H1 (cell line): ENCODE measurements at regions of chr4 and their contacts with region 1.

Region 1: GRCh38 chr4:38069271-38069760 is 109.1 kb downstream of the PTTG2 start:
- DNase-seq: no peak
- H3K4me3 ChIP-seq: no peak overlapping the region
- H3K27ac ChIP-seq: no peak overlapping the region
- H3K4me1 ChIP-seq: peaks cover 0 to 2% (median 0%) of the 10 kb centered on the region in 4 experiments; a peak in 1 of 7 replicates
- H3K27me3 ChIP-seq: no peaks in the 10 kb centered on the region
- CTCF ChIP-seq: peak; percentile 64 to 89 (median 74)
- EP300 ChIP-seq: no peak
- POLR2A ChIP-seq: no peak
- RAD21 ChIP-seq: peak; percentile 89 to 92

Region 2: DNA sequence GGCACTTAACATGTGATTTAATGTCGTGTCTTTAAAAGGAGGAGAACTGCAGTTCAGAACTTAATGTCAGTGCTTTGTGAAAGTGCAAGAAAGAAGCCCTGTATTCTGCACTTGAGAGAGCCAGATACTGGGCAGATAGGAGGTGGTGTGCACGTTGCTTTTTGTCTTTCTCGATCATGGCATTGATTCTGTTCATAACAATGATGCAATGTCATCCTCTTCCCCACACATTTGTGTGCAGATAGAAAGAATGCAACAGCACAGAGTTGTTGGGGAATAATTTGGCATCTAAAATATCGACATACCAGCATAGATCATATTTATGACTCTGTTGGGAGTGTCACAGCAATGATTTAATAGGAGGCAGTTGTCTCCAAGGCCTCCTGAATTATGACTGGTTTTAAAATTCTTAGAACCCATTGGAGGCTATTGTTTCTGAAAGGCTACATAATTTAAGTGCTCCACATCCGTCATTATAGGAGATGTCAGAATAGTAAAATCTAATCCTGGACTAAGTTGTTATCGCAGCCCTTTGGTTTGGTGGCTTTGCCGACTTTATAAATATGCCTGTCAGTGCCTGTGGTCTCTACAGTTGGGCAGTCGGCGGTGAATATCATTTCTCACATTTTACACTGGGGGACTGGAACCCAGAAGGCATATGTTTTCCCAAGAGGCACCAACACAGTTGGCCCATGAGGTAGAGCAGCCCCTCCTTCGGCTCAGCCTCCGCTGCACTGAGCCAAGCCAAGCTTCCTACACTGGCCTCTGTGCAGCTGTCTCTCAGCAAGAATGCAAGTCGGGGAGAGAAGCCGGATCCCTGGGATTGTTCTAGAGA is 15.8 kb after region 1 on chr4:
- CTCF ChIA-PET with region 1: interaction called, 25 read pairs
- POLR2A ChIA-PET with region 1: no interaction called
- DNase-seq: no peak
- H3K4me3 ChIP-seq: no peak overlapping the region
- H3K27ac ChIP-seq: no peak overlapping the region
- H3K4me1 ChIP-seq: peaks cover 7 to 19% (median 14%) of the 10 kb centered on the region in 4 experiments; a peak in 5 of 7 replicates
- H3K27me3 ChIP-seq: no peaks in the 10 kb centered on the region
- CTCF ChIP-seq: no peak
- EP300 ChIP-seq: no peak
- POLR2A ChIP-seq: no peak
- RAD21 ChIP-seq: no peak

Region 3: GRCh38 chr4:38114386-38115150 is 45.3 kb after region 1 on chr4:
- CTCF ChIA-PET with region 1: interaction called, 11 read pairs
- POLR2A ChIA-PET with region 1: interaction called, 3 read pairs
- DNase-seq: peak in 1 of 2 experiments; percentile 25
- H3K4me3 ChIP-seq: no peak overlapping the region
- H3K27ac ChIP-seq: no peak overlapping the region
- H3K4me1 ChIP-seq: peaks cover 6 to 26% (median 15%) of the 10 kb centered on the region in 4 experiments; a peak in 5 of 7 replicates
- H3K27me3 ChIP-seq: no peaks in the 10 kb centered on the region
- CTCF ChIP-seq: no peak
- EP300 ChIP-seq: no peak
- POLR2A ChIP-seq: no peak
- RAD21 ChIP-seq: no peak

Region 4: DNA sequence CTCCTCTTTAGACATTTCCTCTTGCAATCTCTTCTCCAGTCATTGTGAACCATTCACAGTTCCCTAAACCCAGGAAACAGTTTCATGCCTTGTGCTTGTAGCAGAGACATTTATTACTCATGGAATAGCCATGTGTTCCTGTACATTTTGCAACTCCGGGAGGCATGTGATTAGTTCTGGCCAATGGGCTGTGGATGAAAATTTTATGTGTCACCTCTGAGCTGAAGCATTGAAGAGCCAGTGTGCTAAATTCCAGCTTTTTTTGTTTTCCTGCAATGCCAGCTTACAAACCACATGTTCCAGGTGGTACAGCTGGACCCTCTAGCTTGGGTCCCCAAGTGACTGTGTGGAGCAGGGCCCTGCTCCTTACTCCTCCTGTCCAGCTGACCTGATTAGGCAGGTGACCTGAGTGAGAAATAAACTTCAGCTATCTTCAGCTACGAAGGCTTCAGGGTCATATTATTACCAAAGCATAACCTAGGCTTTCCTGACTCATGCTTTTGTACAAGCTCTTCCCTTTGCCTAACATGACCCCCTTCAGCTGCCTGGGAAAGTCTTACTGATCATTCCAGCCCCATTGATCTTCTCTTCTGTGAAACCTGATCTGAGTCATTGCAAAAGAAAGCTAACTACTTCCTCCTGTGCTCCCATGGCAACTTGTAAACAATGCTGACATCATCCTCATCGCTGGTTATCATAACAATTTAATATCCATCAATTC is 91.3 kb after region 1 on chr4:
- CTCF ChIA-PET with region 1: interaction called, 29 read pairs
- POLR2A ChIA-PET with region 1: no interaction called
- DNase-seq: no peak
- H3K4me3 ChIP-seq: no peak overlapping the region
- H3K27ac ChIP-seq: no peak overlapping the region
- H3K4me1 ChIP-seq: peaks cover 0 to 10% (median 2%) of the 10 kb centered on the region in 4 experiments; a peak in 5 of 7 replicates
- H3K27me3 ChIP-seq: no peaks in the 10 kb centered on the region
- CTCF ChIP-seq: no peak
- EP300 ChIP-seq: peak in 1 of 2 experiments; percentile 77; a peak in 1 of 3 replicates
- POLR2A ChIP-seq: no peak
- RAD21 ChIP-seq: no peak

Region 5: GRCh38 chr4:38174801-38175200 is 105.5 kb after region 1 on chr4:
- CTCF ChIA-PET with region 1: interaction called, 35 read pairs
- POLR2A ChIA-PET with region 1: no interaction called
- DNase-seq: no peak
- H3K4me3 ChIP-seq: no peak overlapping the region
- H3K27ac ChIP-seq: no peak overlapping the region
- H3K4me1 ChIP-seq: no peaks in the 10 kb centered on the region
- H3K27me3 ChIP-seq: peaks cover 0 to 2% (median 0%) of the 10 kb centered on the region in 4 experiments; a peak in 1 of 7 replicates
- CTCF ChIP-seq: no peak
- EP300 ChIP-seq: no peak
- POLR2A ChIP-seq: no peak
- RAD21 ChIP-seq: no peak